ENCODE measurements at regions of chr2 and their contacts with region 1.

Region 1: DNA sequence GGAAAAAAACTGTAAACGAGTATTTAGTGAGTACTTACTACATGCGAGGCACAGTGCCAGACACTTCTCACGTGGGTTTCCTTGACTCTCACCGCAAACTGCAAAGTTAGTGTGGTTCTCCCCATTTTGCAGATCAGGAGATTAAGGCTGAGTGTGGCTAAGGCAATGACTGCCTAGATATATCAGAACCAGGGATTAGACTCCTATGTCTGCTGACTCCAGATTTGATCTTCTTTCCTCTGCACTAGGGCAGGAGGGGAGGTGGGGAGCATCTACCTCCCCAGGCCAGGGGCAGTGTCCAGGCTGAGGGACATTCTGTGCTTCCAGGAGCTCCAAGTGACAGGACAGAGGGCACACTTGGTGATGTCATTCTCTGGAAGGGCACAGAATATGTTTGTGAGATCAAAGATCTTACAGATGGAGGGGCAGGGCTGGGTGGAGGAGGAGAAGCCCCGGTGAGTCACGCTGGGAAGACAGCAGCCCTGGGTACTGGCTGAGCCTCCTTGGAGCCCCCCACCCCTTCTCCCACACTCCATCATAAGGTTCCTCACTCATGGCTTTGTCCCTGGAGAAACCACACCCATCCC is 92.4 kb downstream of the RHOB start:
- DNase-seq: peak; percentile 67
- ATAC-seq: peak; percentile 1
- H3K4me3 ChIP-seq: peak overlapping the region in 1 of 3 experiments; percentile 59; a peak in 1 of 6 replicates
- H3K27ac ChIP-seq: peak overlapping the region; percentile 97
- H3K4me1 ChIP-seq: peaks cover 82% of the 10 kb centered on the region
- H3K27me3 ChIP-seq: no peaks in the 10 kb centered on the region
- CTCF ChIP-seq: no peak
- EP300 ChIP-seq: no peak
- POLR2A ChIP-seq: no peak
- RAD21 ChIP-seq: no peak

Region 2: GRCh38 chr2:20452551-20452950 is 86.7 kb before region 1 on chr2:
- CTCF ChIA-PET with region 1: no interaction called
- POLR2A ChIA-PET with region 1: interaction called, 268 read pairs
- in situ Hi-C with region 1: loop called (anchors 5 kb)
- intact Hi-C with region 1: loop called (anchors 1 kb)
- DNase-seq: peak; percentile 65
- ATAC-seq: peak; percentile 27
- H3K4me3 ChIP-seq: no peak overlapping the region
- H3K27ac ChIP-seq: no peak overlapping the region
- H3K4me1 ChIP-seq: peaks cover 57% of the 10 kb centered on the region
- H3K27me3 ChIP-seq: no peaks in the 10 kb centered on the region; a peak in 1 of 5 replicates
- CTCF ChIP-seq: peak; percentile 73
- EP300 ChIP-seq: no peak
- POLR2A ChIP-seq: no peak
- RAD21 ChIP-seq: peak; percentile 53

Region 3: GRCh38 chr2:20525041-20526035 is 13.9 kb before region 1 on chr2:
- CTCF ChIA-PET with region 1: no interaction called
- POLR2A ChIA-PET with region 1: interaction called, 209 read pairs
- in situ Hi-C with region 1: no loop called
- intact Hi-C with region 1: loop called (anchors 1 kb)
- DNase-seq: peak; percentile 96
- ATAC-seq: peak; percentile 96
- H3K4me3 ChIP-seq: peak overlapping the region; percentile 2 to 56 (median 21); a peak in 5 of 6 replicates
- H3K27ac ChIP-seq: peak overlapping the region; percentile 69
- H3K4me1 ChIP-seq: peaks cover 81% of the 10 kb centered on the region
- H3K27me3 ChIP-seq: no peaks in the 10 kb centered on the region
- CTCF ChIP-seq: peak; percentile 80
- EP300 ChIP-seq: peak; percentile 48 to 53; a peak in 3 of 4 replicates
- POLR2A ChIP-seq: peak in 1 of 2 experiments; percentile 70; a peak in 2 of 4 replicates
- RAD21 ChIP-seq: peak; percentile 82

Region 4: DNA sequence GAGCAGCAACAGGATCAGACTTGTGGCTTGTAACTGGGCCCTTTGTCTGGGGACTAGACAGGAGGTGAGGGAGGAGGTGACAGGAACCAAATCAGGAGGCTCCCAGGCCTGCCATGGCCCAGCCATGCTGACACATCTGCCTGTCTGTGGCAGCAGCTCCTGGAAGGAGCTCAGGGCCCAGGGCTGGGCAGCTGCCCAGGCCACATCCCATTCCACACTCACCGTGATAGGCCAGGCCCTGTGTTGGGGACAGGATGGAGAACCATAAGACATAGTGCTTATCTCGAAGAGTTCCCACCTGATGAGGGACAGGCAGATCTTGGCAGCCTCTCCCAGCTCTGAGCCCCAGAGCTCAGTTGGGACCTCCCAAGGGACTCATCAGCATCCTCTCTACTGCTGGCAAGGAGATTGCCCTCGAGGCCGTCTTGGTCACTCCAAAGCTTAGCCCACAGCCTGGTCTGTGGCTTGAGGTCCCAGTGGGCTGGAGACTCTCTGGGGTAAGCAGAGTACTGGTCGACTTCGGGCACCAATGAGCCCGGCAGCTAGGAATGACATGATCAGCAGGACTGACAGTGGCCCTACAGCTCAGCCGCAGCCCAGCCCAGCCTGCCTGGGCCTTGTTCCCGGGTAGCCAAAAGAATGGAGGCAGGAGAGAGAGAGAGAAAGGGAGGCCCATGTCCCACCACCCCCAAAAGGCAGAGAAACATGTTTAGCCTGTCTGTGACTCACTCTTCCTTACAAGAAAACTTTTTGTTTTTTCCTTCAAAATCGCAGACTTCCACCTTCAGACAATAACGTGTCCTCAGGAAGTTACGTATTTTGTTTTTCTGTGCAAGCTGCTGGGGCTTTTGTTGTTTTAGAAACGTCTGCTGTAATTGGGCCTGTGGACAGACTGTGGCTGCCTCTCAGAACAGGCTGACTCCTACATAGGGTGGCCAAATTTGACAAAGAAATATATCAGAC is 29.6 kb after region 1 on chr2:
- CTCF ChIA-PET with region 1: no interaction called
- POLR2A ChIA-PET with region 1: interaction called, 127 read pairs
- in situ Hi-C with region 1: no loop called
- intact Hi-C with region 1: no loop called
- DNase-seq: no peak
- ATAC-seq: no peak
- H3K4me3 ChIP-seq: no peak overlapping the region
- H3K27ac ChIP-seq: peak overlapping the region; percentile 49
- H3K4me1 ChIP-seq: peaks cover 96% of the 10 kb centered on the region
- H3K27me3 ChIP-seq: no peaks in the 10 kb centered on the region
- CTCF ChIP-seq: no peak
- EP300 ChIP-seq: no peak
- POLR2A ChIP-seq: no peak
- RAD21 ChIP-seq: no peak

Region 5: DNA sequence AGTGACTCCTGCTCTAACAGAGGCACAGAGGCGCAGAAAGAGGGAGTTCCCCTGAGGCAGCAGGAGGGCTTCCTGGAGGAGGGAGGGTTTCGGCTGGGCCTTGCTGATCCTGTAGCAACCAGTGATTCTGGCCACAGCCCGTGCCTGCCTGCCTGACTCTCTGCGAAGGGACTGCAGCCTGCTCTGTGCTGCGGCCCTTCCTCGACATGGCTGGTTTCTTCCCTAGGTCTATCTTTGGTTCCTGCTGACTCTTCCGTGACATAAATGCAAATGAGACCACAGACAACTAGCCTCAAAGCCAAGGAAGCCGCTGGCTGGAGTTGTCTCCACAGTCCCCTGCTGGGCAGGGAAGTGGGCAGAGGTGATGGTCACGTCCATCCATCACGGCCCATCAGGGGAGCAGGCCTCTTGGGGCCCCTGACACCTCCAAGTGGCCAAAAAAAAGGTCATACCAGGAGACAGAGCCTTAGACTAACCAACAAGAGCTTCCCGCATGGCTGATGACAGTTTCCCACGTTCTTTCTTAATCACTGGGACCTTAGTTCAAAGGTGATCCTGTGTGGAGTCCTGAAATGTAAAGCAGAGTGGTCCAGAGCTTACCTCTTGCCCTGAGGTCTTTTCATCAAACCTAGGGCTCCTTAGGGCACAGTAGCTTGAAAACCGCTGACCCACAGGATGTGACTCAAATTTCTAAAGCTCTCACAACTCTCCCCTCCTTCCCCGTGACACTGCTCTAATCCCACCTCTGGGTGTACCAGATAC is 56.4 kb after region 1 on chr2:
- CTCF ChIA-PET with region 1: no interaction called
- POLR2A ChIA-PET with region 1: interaction called, 215 read pairs
- in situ Hi-C with region 1: no loop called
- intact Hi-C with region 1: loop called (anchors 1 kb)
- DNase-seq: peak; percentile 66
- ATAC-seq: no peak
- H3K4me3 ChIP-seq: no peak overlapping the region
- H3K27ac ChIP-seq: peak overlapping the region; percentile 97
- H3K4me1 ChIP-seq: peaks cover 98% of the 10 kb centered on the region
- H3K27me3 ChIP-seq: no peaks in the 10 kb centered on the region; a peak in 1 of 5 replicates
- CTCF ChIP-seq: no peak
- EP300 ChIP-seq: peak in 1 of 2 experiments; percentile 62; a peak in 1 of 4 replicates
- POLR2A ChIP-seq: peak in 1 of 2 experiments; percentile 4; a peak in 1 of 4 replicates
- RAD21 ChIP-seq: peak; percentile 33; the same call in 1 of the 2 replicates

Region 6: GRCh38 chr2:20635675-20636584 is 96.7 kb after region 1 on chr2:
- CTCF ChIA-PET with region 1: no interaction called
- POLR2A ChIA-PET with region 1: interaction called, 13 read pairs
- in situ Hi-C with region 1: no loop called
- intact Hi-C with region 1: no loop called
- DNase-seq: peak; percentile 74
- ATAC-seq: peak; percentile 96
- H3K4me3 ChIP-seq: no peak overlapping the region; a peak in 1 of 6 replicates
- H3K27ac ChIP-seq: peak overlapping the region; percentile 23
- H3K4me1 ChIP-seq: peaks cover 55% of the 10 kb centered on the region
- H3K27me3 ChIP-seq: no peaks in the 10 kb centered on the region
- CTCF ChIP-seq: peak; percentile 100
- EP300 ChIP-seq: peak in 1 of 2 experiments; percentile 29; a peak in 1 of 4 replicates
- POLR2A ChIP-seq: no peak
- RAD21 ChIP-seq: peak; percentile 100